ENCODE measurements at regions of chr1 and their contacts with region 1.

Region 1: DNA sequence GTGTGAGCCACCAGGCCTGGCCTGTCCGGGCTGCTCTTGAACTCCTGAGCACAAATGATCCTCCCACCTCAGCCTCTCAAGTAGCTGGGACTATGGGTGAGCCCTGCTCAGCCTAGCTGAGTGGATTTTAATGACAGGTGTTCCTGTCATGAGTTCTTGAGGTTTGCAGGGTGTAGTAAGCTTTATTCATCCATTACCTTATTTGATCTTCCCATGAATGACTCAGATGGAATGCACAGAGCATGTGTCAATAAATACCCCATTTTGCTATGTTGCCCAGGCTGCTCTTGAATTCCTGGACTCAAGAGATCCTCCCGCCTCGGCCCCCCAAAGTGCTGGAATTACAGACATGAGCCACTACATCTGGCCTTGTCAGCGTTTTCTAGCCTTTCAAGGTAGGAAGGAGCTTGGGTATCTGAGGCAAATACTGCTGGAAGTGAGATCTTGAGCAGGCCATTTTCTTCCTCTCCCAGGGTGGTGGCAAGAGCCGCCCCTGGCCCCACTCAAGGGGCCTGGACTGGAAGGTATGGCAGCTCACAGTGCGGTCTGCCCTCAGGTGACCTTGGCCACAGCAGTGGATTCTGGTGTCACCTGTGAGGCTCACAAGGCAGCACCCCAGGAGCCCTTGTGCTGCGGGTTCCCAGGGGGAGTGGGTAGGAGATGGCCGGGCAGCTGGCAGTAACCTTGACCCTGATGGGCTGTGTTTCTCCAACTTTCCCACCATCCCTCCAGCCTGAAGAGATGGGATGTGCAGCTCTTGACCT is 20.0 kb downstream of the PIK3CD start:
- DNase-seq: no peak

Region 2: GRCh38 chr1:9629445-9630201 is 41.9 kb before region 1 on chr1:
- intact Hi-C with region 1: loop called in 1 of 2 experiments (anchors 5 kb)
- DNase-seq: peak; percentile 89

Measured in posterior vena cava (tissue), 2 donors.